PC-9 (cell line): ENCODE measurements at regions of chr5 and their contacts with region 1.

Region 1: DNA sequence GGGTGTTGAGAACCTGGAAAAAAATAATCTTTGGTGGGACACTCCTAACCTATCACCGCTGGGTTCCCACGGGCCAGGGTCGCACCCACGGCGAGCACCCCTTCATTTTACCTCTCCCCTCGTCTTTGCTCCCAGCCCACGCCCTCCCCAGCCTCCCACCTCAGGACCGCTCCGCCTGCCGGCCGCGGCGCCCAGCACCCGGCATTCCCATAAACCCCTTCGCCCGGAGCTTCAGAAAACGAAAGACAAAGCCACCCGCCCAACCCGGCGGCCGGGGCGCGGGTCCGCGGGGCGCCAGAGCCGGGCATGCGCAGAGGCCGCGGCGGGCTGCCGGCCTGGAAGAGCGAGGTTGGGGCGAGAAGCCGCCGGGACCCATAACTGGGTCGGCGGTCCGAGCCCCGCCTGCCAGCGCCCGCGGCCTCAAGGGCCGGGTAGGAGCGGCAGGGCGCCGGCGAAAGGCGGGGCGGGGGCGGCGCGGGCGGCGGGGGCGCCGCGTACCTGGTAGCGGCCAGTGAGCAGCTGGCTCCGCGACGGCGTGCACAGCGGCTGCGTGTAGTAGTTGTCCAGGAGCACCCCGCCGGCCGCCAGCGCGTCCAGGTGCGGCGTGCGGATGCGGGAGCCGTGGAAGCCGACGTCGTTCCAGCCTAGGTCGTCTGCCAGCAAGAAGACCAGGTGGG is 533 bp downstream of the ARSB start:
- DNase-seq: peak; percentile 64 to 90
- H3K4me3 ChIP-seq: peak overlapping the region; percentile 70
- H3K27ac ChIP-seq: peak overlapping the region; percentile 48
- H3K4me1 ChIP-seq: peaks cover 41% of the 10 kb centered on the region
- H3K27me3 ChIP-seq: no peaks in the 10 kb centered on the region
- CTCF ChIP-seq: no peak; the same call in 1 of the 2 replicates

Region 2: DNA sequence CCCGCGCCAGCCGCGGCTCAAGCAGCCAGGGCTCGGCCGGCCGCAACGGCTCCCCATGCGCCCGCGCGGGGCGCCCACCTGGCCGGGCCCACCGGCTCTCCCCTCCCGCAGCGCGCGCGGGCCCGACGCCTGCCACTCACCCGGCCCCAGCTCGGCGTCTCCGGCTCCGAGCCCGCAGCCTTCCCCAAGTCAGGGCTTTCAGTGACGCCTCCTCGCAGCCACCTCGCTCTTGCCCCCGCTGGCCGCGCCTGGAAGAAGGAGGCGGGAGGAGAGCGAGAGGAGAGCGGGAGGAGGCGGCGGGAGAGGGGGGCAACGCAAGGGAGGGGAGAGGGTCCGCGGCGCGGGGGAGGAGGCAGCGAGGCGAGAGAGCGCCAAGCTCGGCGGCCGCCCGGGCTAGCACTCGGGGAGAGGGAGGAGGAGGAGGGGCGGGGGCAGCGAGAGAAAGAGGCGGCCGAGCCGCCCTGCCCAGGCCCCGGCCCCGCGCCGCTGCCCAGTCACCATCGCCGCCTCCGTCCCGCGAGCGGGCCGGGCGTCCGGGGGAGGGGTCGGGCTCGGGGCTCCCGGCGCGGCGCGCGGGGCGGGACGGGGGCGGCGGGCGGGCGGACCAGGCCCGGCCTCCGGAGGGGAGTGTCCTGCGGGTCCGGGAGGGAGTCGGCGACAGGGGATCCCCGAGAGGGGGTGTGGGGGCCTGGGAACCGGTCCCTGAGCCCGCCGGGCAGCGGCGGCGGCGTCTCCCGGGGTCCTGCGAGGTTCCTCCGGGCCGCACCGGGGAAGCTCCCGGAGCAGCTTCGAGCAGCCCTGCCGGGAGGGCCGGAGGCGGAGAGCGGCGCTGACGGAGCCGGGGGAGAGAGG is 336.0 kb before region 1 on chr5 and contains the start of gene LHFPL2:
- CTCF ChIA-PET with region 1: no interaction called
- POLR2A ChIA-PET with region 1: no interaction called
- intact Hi-C with region 1: loop called (anchors 10 kb)
- DNase-seq: peak in 1 of 2 experiments; percentile 77
- H3K4me3 ChIP-seq: peak within 1 kb of the TSS; percentile 85
- H3K27ac ChIP-seq: peak within 1 kb of the TSS; percentile 75
- H3K4me1 ChIP-seq: peaks cover 12% of the 10 kb centered on the region
- H3K27me3 ChIP-seq: no peaks in the 10 kb centered on the region
- CTCF ChIP-seq: no peak
- total RNA-seq, gene LHFPL2: 10.1 and 14.0 TPM in 2 replicates